Posterior cingulate gyrus (tissue), 11 donors: ENCODE measurements at regions of chr6 and their contacts with region 1.

Region 1: GRCh38 chr6:154156135-154156896 is 117.3 kb downstream of the OPRM1 start:
- DNase-seq: peak in 4 of 10 donors; percentile 25 to 67 (median 28)

Region 2: GRCh38 chr6:154276810-154277628 is 120.7 kb after region 1 on chr6:
- intact Hi-C with region 1: loop called (anchors 1 kb)
- DNase-seq: no peak

Region 3: DNA sequence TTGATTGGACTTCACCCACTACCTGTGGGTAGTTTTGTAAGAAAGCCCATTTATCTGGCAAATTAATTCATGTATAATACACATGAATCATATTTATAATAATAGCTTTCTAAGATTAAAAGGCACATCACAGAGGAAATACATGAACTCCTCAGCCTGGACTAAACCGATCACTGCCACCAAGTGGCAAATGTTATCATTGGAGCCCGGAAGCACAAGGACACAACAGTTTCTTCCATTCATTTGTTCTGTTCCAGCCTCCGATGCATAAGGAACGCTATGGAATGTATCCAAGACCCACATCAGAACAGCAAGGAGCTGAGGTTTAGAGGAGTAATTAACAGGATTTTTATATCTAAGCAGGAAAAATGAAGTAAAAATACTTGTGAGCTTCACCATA is 214.2 kb after region 1 on chr6:
- intact Hi-C with region 1: loop called (anchors 5 kb)
- DNase-seq: peak in 6 of 10 donors; percentile 16 to 88 (median 37)

Region 4: GRCh38 chr6:154408891-154409500 is 252.7 kb after region 1 on chr6:
- intact Hi-C with region 1: loop called (anchors 10 kb)
- DNase-seq: peak in 5 of 10 donors; percentile 28 to 87 (median 50)

Region 5: DNA sequence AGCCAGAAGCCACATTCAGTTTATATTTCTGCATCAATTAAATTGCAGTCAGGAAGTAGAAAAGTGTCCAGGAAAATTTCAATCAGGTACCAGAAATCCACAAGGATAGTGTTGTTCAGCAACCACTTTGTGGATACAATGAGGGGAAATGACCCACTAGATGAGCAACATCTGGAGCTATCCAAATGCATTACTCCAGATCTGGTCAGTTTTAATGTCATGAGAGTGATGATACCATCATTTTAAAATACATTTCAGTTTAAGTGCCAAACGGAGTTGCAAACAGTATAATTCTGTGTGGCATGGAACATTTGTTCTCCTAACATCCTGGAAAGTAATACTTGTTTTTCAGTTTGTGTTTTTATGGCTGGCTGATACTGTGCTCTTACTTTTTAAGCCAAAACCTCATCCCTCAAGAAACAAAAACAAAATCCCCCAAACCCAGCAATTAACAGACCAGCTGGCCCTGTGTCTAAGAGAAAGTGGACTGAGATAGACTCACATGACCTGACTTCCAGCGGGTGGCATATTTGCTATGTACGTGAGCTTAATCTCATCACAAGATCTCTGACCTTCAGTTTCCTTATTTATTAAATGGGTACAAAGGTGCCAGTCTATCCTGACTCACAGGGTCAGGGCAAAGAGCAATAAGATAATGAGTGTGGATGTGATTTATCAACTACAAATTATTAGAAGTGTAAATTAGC is 413.0 kb after region 1 on chr6:
- intact Hi-C with region 1: no loop called
- DNase-seq: no peak

Region 6: DNA sequence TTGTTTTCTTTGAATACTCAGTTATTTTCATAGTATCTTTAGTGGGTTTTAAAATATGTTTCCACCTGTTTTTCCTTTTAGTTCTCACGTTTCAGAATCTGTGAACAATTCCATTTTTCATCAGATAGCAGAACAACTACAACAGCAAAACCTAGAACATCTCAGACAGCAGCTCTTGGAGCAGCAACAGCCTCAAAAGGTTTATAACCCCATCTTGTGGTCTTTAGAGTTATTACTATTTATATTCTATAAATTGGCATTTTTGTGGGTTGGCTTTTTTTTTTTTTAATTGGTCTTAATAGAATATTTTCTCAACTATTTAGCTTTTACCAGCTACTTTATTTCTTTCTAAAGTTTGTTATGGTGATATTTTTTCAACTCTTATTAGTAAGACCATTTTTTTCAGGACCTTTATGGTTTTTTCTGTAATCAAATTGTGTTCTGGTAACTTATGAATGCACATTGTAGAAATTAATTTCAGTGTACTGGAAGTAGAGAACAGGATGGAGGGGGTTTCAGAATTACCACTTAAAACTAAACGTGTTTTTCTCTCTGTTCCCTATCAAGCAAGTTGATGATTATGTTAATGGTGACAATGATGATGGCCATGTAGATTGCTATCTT is 649.1 kb after region 1 on chr6:
- intact Hi-C with region 1: loop called (anchors 10 kb)
- DNase-seq: no peak